ENCODE measurements at regions of chr7 and their contacts with region 1.

Region 1: DNA sequence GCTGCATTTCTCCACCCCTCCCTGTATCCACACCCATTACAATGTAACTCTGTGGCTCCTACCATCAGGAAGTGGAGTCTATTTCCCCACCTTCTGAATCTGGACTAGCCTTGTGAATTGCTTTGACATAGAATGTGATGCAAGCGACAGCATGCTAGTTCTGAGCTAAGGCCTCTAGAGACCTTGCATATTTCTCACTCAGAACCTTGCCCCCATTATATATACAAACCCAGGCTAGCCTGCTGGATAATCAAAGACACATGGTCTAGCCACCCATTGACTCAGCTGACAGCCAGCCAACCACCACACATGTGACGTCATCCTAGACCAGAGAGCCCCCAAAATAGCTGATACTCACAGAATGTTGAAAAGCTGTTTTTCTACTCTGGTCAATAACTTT is 77.9 kb downstream of the CCDC71L start:
- DNase-seq: no peak
- H3K4me3 ChIP-seq: no peak overlapping the region
- H3K4me3 Mint-ChIP-seq: no peak overlapping the region
- H3K27ac ChIP-seq: no peak overlapping the region
- H3K27ac Mint-ChIP-seq: no peak overlapping the region
- H3K4me1 ChIP-seq: no peaks in the 10 kb centered on the region
- H3K4me1 Mint-ChIP-seq: no peaks in the 10 kb centered on the region
- H3K27me3 ChIP-seq: no peaks in the 10 kb centered on the region
- H3K27me3 Mint-ChIP-seq: peaks cover 1 to 12% of the 10 kb centered on the region in 2 donors

Region 2: DNA sequence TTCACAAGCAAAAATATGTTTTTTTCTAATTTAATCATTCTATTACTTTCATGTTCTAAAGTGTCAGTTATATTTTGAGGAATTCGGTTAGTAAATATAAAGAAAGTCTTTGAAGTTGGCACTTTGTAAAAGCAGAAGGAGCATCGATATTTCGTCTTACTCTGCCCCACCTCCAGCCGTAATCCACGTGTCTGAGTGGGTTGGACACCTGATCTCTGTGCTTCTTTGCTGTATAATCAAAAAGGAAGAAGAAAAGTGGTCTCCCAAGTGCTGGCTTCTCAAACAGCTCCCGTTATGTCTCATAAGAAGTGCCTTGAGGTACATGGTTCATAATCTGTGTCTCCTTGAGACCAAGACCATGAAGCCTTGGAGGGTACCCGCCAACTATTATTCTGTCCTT is 481.2 kb after region 1 on chr7:
- CTCF ChIA-PET with region 1: no interaction called
- POLR2A ChIA-PET with region 1: no interaction called
- intact Hi-C with region 1: loop called (anchors 5 kb)
- DNase-seq: no peak
- H3K4me3 ChIP-seq: no peak overlapping the region
- H3K4me3 Mint-ChIP-seq: no peak overlapping the region
- H3K27ac ChIP-seq: no peak overlapping the region
- H3K27ac Mint-ChIP-seq: no peak overlapping the region
- H3K4me1 ChIP-seq: no peaks in the 10 kb centered on the region
- H3K4me1 Mint-ChIP-seq: no peaks in the 10 kb centered on the region
- H3K27me3 ChIP-seq: no peaks in the 10 kb centered on the region
- H3K27me3 Mint-ChIP-seq: peaks cover 2 to 10% of the 10 kb centered on the region in 2 donors